A673 (cell line): ENCODE measurements at regions of chr6 and their contacts with region 1.

Region 1: GRCh38 chr6:153032255-153032882 is 29.9 kb upstream of the MTRF1L start:
- DNase-seq: peak; percentile 71
- H3K4me3 ChIP-seq: no peak overlapping the region
- H3K27ac ChIP-seq: no peak overlapping the region
- H3K4me1 ChIP-seq: no peaks in the 10 kb centered on the region
- H3K27me3 ChIP-seq: no peaks in the 10 kb centered on the region
- CTCF ChIP-seq: peak; percentile 64

Region 2: DNA sequence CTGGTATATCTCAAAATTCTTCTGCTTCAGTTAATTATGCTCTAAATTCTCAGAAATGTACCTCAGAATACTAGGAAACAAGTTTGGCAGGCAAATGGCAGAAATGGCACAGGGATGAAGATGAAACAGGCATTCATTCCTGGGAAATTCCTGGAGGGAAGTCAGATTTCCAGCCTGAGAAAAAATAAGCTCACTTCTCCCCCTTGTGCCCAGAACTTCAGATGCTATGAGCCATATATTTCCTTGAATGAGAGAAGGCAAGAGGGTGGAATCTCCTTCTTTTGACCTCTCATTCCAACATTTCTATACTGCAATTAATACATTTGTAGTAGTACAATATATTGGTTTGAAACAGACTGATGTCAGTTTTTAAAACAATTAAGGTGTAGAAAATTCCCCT is 75.9 kb after region 1 on chr6:
- CTCF ChIA-PET with region 1: no interaction called
- POLR2A ChIA-PET with region 1: no interaction called
- intact Hi-C with region 1: loop called (anchors 5 kb)
- DNase-seq: no peak
- H3K4me3 ChIP-seq: no peak overlapping the region
- H3K27ac ChIP-seq: no peak overlapping the region
- H3K4me1 ChIP-seq: no peaks in the 10 kb centered on the region
- H3K27me3 ChIP-seq: no peaks in the 10 kb centered on the region
- CTCF ChIP-seq: 0 out of 2 replicates have a peak, but pooled peaks have one; percentile 16

Region 3: GRCh38 chr6:153231048-153231646 is 198.8 kb after region 1 on chr6:
- CTCF ChIA-PET with region 1: no interaction called
- POLR2A ChIA-PET with region 1: no interaction called
- intact Hi-C with region 1: loop called (anchors 5 kb)
- DNase-seq: peak; percentile 80
- H3K4me3 ChIP-seq: no peak overlapping the region
- H3K27ac ChIP-seq: no peak overlapping the region
- H3K4me1 ChIP-seq: peaks cover 5% of the 10 kb centered on the region
- H3K27me3 ChIP-seq: no peaks in the 10 kb centered on the region
- CTCF ChIP-seq: peak; percentile 98

Region 4: GRCh38 chr6:153312641-153313040 is 280.3 kb after region 1 on chr6:
- CTCF ChIA-PET with region 1: interaction called, 3 read pairs
- POLR2A ChIA-PET with region 1: no interaction called
- intact Hi-C with region 1: loop called (anchors 5 kb)
- DNase-seq: peak; percentile 86
- H3K4me3 ChIP-seq: no peak overlapping the region
- H3K27ac ChIP-seq: peak overlapping the region; percentile 22
- H3K4me1 ChIP-seq: peaks cover 52% of the 10 kb centered on the region
- H3K27me3 ChIP-seq: no peaks in the 10 kb centered on the region
- CTCF ChIP-seq: peak; percentile 78

Region 5: GRCh38 chr6:153553627-153554026 is 521.3 kb after region 1 on chr6:
- CTCF ChIA-PET with region 1: no interaction called
- POLR2A ChIA-PET with region 1: no interaction called
- intact Hi-C with region 1: loop called (anchors 5 kb)
- DNase-seq: peak; percentile 76
- H3K4me3 ChIP-seq: no peak overlapping the region
- H3K27ac ChIP-seq: no peak overlapping the region
- H3K4me1 ChIP-seq: peaks cover 6% of the 10 kb centered on the region
- H3K27me3 ChIP-seq: no peaks in the 10 kb centered on the region
- CTCF ChIP-seq: peak; percentile 73

Region 6: GRCh38 chr6:153790048-153790447 is 757.7 kb after region 1 on chr6:
- CTCF ChIA-PET with region 1: no interaction called
- POLR2A ChIA-PET with region 1: no interaction called
- intact Hi-C with region 1: loop called (anchors 2 kb)
- DNase-seq: peak; percentile 77
- H3K4me3 ChIP-seq: no peak overlapping the region
- H3K27ac ChIP-seq: no peak overlapping the region
- H3K4me1 ChIP-seq: peaks cover 4% of the 10 kb centered on the region
- H3K27me3 ChIP-seq: no peaks in the 10 kb centered on the region
- CTCF ChIP-seq: 0 out of 2 replicates have a peak, but pooled peaks have one; percentile 23

Region 7: DNA sequence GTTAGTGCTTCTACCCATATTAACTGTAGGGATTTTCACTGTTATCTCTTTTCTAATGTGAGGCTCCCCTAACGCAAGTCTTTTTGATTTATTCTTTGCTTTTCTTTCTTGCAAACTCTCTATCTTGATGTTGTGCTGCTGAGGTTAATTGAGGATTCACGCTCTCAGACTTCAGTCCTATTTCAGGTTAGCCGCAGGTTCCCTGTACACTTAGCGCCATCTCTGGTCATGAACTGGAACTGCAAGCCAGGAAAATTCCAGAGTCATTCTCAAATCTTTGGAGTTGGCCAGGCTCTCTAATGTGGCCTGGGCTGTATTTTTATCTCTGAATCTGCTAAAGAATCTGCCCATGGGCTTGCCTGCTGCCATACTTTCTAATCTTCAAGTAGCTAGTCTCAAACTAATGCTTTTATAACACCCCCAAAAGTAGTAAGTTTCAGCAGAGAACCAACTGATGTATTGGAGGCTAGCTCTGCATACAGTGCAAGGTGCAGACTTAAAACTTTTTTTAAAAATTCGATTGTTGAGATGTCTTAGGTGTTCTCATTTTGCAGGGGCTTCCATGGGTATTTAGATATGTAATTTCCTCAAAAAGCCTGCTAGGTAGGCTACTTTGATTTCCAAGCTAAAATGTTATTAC is 915.6 kb after region 1 on chr6:
- CTCF ChIA-PET with region 1: no interaction called
- POLR2A ChIA-PET with region 1: no interaction called
- intact Hi-C with region 1: loop called (anchors 5 kb)
- DNase-seq: peak; percentile 60
- H3K4me3 ChIP-seq: no peak overlapping the region
- H3K27ac ChIP-seq: no peak overlapping the region
- H3K4me1 ChIP-seq: no peaks in the 10 kb centered on the region
- H3K27me3 ChIP-seq: no peaks in the 10 kb centered on the region
- CTCF ChIP-seq: peak; percentile 96